Mucosa of descending colon (tissue), 3 donors: ENCODE measurements at regions of chr6 and their contacts with region 1.

Region 1: GRCh38 chr6:63193324-63193723 is 17.9 kb upstream of the FKBP1C start:
- DNase-seq: no peak
- ATAC-seq: no peak
- H3K4me3 ChIP-seq: no peak overlapping the region
- H3K4me1 ChIP-seq: no peaks in the 10 kb centered on the region
- CTCF ChIP-seq: no peak

Region 2: GRCh38 chr6:63245909-63246308 is 52.6 kb after region 1 on chr6:
- intact Hi-C with region 1: no loop called
- DNase-seq: no peak
- ATAC-seq: no peak
- H3K4me3 ChIP-seq: no peak overlapping the region
- H3K4me1 ChIP-seq: no peaks in the 10 kb centered on the region
- CTCF ChIP-seq: no peak

Region 3: GRCh38 chr6:63802606-63803206 is 609.4 kb after region 1 on chr6:
- intact Hi-C with region 1: loop called in 1 of 2 experiments (anchors 5 kb)
- DNase-seq: peak in 1 of 3 donors; percentile 41
- ATAC-seq: no peak
- H3K4me3 ChIP-seq: no peak overlapping the region
- H3K4me1 ChIP-seq: no peaks in the 10 kb centered on the region
- CTCF ChIP-seq: peak; percentile 15

Region 4: DNA sequence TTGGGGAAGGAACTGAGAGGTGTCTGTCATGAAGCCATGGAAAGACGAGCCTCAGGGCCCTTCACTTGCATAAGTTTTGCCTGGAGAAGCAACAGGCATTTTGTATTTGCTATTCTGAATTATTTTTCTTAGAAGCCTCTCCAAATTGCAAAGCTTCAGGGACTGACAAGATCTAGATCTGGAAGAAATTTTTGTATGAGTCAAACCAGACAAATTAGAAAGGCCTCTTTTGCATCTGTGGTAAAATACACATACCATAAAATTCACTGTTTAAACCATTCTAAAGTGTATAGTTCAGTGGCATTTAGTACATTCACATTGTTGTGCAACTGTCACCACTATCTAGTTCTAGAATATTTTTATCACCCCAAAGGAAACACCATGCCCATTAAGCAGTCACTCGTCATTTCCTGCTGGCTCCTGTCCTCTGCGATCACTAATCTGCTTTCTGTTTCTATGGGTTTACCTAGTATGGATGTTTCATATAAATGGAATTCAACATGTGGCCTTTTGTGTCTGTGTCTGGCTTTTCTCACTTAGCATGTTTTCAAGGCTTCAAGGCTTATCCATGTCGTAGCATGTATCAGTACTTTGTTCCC is 711.4 kb after region 1 on chr6:
- intact Hi-C with region 1: loop called in 1 of 2 experiments (anchors 5 kb)
- DNase-seq: no peak
- ATAC-seq: peak; percentile 55
- H3K4me3 ChIP-seq: no peak overlapping the region
- H3K4me1 ChIP-seq: no peaks in the 10 kb centered on the region
- CTCF ChIP-seq: no peak